Posterior vena cava (tissue), 2 donors: ENCODE measurements at regions of chr12 and their contacts with region 1.

Region 1: GRCh38 chr12:34354239-34355200 is 332.2 kb downstream of the ALG10 start:
- DNase-seq: no peak

Region 2: GRCh38 chr12:34303091-34303870 is 51.2 kb before region 1 on chr12:
- intact Hi-C with region 1: loop called in 1 of 2 experiments (anchors 5 kb)
- DNase-seq: peak; percentile 53

Region 3: DNA sequence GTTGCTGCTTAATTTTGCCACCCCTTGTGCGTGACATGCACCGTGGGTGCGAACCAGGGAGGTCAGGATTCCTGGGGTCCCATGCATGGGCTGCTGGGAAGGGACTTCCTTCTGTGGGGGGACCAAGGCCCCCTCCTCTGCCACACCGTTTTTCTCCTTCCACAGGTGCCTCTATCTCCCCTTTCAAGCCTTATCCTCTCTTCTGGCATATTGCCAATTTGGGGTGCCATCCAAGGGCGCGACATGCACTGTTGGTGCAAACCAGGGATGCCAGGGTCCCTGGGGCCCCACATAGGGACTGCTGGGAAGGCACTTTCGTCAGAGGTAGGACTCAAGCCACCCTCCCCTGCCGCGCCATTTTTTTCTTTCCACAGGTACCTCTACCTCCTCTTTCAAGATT is 43.2 kb before region 1 on chr12:
- intact Hi-C with region 1: loop called (anchors 1 to 5 kb)
- DNase-seq: no peak

Region 4: DNA sequence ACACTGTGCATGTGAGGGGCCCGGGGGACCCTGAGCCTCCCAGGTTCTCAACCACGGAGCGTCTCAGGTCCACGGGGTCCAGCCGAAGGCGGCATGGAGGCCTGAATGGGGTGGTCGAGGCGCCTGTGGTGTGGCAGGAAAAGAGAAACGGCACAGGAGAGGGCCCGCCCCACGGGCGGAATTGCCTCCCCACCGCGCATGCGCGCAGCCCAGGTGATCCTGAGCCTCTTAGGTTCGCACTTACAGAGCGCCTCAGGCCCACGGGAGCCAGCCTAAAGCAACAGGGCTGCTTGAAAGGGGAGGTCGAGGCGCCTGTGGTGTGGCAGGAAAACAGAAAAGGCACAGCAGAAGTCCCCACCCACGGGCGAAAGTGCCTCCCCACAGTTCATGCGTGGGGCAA is 21.2 kb before region 1 on chr12:
- intact Hi-C with region 1: no loop called
- DNase-seq: no peak

Region 5: DNA sequence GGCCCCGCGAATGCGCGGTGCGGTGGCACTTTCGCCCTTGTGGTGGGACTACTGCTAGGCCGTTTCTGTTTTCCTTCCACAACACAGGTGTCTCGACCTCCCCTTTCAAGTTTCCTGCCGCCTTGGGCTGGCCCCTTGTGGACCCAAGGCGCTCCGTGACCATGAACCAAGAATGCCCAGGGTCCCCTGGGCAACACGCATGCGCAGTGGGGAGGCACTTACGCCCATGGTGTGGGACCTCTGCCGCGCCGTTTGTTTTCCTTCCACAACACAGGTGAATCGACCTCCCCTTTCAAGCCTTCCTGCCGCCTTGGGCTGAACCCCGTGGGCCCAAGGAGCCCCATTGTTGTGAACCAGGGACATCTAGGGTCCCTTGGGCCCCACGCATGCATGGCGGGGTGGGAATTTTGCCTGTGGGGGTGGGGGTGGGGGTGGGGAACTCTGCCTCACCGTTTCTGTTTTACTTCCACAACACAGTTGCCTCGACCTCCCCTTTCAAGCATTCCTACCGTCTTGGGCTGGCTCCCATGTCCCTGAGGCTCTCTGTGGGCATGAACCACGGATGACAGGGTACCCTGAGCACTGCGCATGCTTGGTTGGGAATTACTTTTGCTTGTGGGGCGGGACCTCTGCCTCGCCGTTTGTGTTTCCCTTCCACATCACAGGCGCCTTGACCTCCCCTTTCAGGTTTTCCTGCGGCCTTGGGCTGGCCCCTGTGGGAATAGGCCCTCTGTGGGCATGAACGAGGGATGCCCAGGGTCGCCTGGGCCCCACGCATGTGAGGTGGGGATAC is 22.9 kb after region 1 on chr12:
- intact Hi-C with region 1: loop called in 1 of 2 experiments (anchors 1 kb)
- DNase-seq: no peak